Panc1 (cell line): ENCODE measurements at regions of chr6 and their contacts with region 1.

Region 1: GRCh38 chr6:73675466-73676098 is 20.4 kb upstream of the CD109 start:
- DNase-seq: no peak
- ATAC-seq: peak; percentile 96
- H3K4me3 ChIP-seq: no peak overlapping the region
- H3K27ac ChIP-seq: no peak overlapping the region
- H3K4me1 ChIP-seq: no peaks in the 10 kb centered on the region
- H3K27me3 ChIP-seq: no peaks in the 10 kb centered on the region
- CTCF ChIP-seq: peak; percentile 98

Region 2: DNA sequence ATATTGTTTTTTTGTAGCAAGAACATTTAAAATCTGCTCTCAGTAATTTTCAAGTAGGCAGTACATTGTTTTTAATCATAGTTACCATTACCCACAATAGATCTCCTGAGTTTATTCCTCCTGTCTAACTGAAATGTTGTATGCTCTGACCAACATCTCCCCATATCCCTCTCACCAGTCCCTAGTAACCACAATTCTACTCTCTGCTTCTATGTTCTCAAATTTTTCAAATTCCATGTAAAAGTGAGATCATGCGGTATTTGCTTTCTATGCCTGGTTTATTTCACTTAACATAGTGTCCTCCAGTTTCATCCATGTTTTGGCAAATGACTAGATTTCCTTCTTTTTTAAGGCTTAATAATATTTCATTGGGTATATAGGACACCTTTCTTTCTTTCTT is 753.2 kb before region 1 on chr6:
- CTCF ChIA-PET with region 1: interaction called, 11 read pairs
- POLR2A ChIA-PET with region 1: no interaction called
- in situ Hi-C with region 1: no loop called
- intact Hi-C with region 1: no loop called
- DNase-seq: no peak
- ATAC-seq: no peak
- H3K4me3 ChIP-seq: no peak overlapping the region
- H3K27ac ChIP-seq: no peak overlapping the region
- H3K4me1 ChIP-seq: no peaks in the 10 kb centered on the region
- H3K27me3 ChIP-seq: no peaks in the 10 kb centered on the region
- CTCF ChIP-seq: no peak

Region 3: GRCh38 chr6:73695619-73696421 is 20.2 kb after region 1 on chr6 and contains the start of gene CD109:
- CTCF ChIA-PET with region 1: interaction called, 3 read pairs
- POLR2A ChIA-PET with region 1: interaction called, 11 read pairs
- in situ Hi-C with region 1: no loop called
- intact Hi-C with region 1: no loop called
- DNase-seq: peak; percentile 84
- ATAC-seq: peak; percentile 83
- H3K4me3 ChIP-seq: peak within 1 kb of the TSS; percentile 57 to 71
- H3K27ac ChIP-seq: peak within 1 kb of the TSS; percentile 88
- H3K4me1 ChIP-seq: peaks cover 18% of the 10 kb centered on the region
- H3K27me3 ChIP-seq: no peaks in the 10 kb centered on the region
- CTCF ChIP-seq: no peak
- total RNA-seq, gene CD109: 46.1 TPM

Region 4: DNA sequence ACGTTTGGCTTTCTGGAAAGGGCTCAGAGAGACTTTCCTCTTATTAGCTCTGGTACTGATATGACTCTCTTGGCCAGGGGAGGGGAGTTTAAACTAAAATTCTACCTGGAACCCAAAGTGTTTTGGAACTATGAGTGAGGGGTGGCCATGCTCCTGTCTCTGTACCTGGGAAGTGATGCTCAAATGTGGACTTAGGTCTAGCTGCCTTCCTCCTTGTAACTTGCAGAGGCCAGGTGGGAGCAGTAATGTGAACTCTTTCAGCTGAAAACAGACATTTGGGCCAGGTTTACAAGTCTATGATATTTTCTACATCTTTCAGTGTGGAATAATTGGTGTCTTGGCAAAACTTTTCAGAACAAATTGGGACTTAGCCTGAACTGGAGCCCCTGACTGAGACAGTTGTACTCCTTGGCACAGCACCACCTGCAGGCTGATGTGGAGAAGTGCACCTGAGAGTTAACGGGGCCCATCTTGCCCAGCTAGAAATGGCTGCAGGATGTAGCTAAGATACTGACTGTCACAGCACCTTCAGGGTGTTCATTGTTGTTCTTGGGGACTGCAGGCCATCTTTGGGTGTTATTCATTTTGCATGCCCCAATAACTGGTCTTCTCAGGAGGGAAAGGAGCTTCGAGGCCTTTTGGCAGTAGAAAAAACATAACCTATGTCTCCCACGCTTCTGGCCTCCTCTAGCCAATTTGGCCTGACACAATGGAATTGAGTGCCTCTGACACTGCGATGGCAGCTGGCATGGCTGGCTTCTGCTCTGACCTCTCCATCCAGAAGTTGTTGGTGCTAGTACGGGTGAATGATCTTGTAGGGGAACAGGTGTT is 57.5 kb after region 1 on chr6:
- CTCF ChIA-PET with region 1: interaction called, 10 read pairs
- POLR2A ChIA-PET with region 1: interaction called, 4 read pairs
- in situ Hi-C with region 1: no loop called
- intact Hi-C with region 1: loop called (anchors 1 kb)
- DNase-seq: no peak
- ATAC-seq: peak; percentile 91
- H3K4me3 ChIP-seq: no peak overlapping the region
- H3K27ac ChIP-seq: no peak overlapping the region
- H3K4me1 ChIP-seq: no peaks in the 10 kb centered on the region
- H3K27me3 ChIP-seq: no peaks in the 10 kb centered on the region
- CTCF ChIP-seq: peak; percentile 92